Uterus (tissue), 4 donors: ENCODE measurements at regions of chr10 and their contacts with region 1.

Region 1: GRCh38 chr10:100341953-100342626 is 4.9 kb upstream of the SCD start:
- DNase-seq: peak; percentile 23 to 35
- H3K4me3 ChIP-seq: no peak overlapping the region
- H3K27ac ChIP-seq: no peak overlapping the region
- H3K4me1 ChIP-seq: no peaks in the 10 kb centered on the region
- H3K27me3 ChIP-seq: no peaks in the 10 kb centered on the region
- CTCF ChIP-seq: peak; percentile 31 to 59 (median 40)
- POLR2A ChIP-seq: no peak

Region 2: DNA sequence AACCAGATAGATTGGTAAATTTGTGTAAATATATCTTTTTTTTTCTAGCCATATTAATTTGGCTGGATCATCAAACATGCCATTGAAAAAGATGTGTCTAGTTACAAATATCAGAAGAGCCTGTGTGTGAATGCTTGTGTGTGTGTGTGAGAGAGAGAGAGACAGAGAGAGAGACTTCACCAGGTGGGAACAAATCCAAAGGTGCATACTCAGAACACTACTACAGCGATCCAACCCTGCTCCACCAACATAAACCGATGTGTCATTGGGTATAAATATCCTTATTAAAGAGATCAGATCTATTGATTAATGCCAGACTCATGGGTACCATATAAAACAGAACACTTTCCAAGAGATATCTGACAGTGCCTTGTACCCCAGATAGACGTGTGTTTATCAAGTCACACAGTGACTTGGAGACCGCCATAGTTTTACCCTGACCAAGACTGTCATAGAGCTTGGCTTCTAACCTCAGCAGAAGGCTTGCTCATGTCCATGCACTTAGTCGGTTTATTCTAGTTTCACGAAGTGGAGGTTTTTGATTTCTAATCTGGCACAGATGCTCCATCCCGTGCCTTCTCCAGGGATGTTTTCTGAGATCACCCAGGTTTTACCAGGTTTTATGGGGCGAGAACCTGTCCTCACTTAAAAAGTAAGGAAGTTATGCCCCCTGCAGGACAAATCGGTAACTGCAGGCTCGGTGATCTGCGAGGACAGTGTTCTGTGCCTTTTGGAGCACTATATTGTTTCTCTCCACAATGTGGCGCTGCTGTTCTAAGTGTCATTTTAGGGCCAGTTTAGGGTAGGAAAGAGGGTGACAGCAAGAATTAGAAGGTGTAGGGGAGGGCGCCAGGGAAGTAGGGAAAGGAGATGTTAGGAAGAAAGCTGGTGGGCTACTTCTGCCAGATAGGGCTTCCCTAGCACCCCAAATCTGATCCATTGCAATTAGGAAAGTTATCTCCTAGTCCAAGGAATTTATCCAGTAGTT is 91.5 kb after region 1 on chr10:
- intact Hi-C with region 1: loop called (anchors 5 kb)
- DNase-seq: peak; percentile 87 to 93
- H3K4me3 ChIP-seq: no peak overlapping the region
- H3K27ac ChIP-seq: no peak overlapping the region
- H3K4me1 ChIP-seq: no peaks in the 10 kb centered on the region
- H3K27me3 ChIP-seq: no peaks in the 10 kb centered on the region
- CTCF ChIP-seq: peak; percentile 94 to 99 (median 98)
- POLR2A ChIP-seq: no peak